ENCODE measurements at regions of chr11 and their contacts with region 1.

Region 1: GRCh38 chr11:119607726-119608125 is 121.3 kb downstream of the NECTIN1 start:
- DNase-seq: no peak
- ATAC-seq: no peak
- H3K4me3 ChIP-seq: no peak overlapping the region
- H3K27ac ChIP-seq: no peak overlapping the region
- H3K4me1 ChIP-seq: no peaks in the 10 kb centered on the region
- H3K27me3 ChIP-seq: peaks cover 0 to 12% (median 2%) of the 10 kb centered on the region in 3 donors
- CTCF ChIP-seq: no peak

Region 2: DNA sequence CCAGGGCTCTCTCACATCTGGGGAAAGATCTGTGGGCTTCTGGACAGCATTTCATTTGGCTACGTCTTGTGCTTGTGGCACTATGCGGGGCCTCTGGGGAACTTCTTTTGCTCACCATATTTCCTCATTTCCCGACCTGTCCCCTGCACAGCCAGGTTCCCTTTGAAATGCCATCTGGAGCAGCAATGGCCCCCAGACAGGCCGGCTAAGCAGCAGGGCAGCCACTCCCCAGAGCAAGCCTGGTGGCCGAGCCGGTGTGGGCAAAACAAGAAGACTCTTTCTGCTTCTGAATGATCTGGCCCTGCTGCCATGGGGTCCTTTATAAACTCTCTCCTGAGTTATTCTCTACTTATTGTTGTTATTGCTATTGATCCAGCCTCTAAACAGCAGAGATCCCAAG is 311.9 kb after region 1 on chr11:
- intact Hi-C with region 1: loop called in 1 of 2 experiments (anchors 5 kb)
- DNase-seq: no peak
- ATAC-seq: no peak
- H3K4me3 ChIP-seq: no peak overlapping the region
- H3K27ac ChIP-seq: no peak overlapping the region
- H3K4me1 ChIP-seq: no peaks in the 10 kb centered on the region
- H3K27me3 ChIP-seq: peaks cover 0 to 43% (median 0%) of the 10 kb centered on the region in 3 donors
- CTCF ChIP-seq: no peak